ENCODE measurements at regions of chr1 and their contacts with region 1.

Region 1: GRCh38 chr1:151070474-151071276 is at the start of gene GABPB2:
- DNase-seq: peak; percentile 80 to 95 (median 86)
- ATAC-seq: peak; percentile 82
- H3K4me3 Mint-ChIP-seq: peak within 1 kb of the TSS; percentile 95 to 100 (median 100)
- H3K27ac Mint-ChIP-seq: peak within 1 kb of the TSS; percentile 98 to 100 (median 100)
- H3K4me1 Mint-ChIP-seq: peaks cover 12 to 42% (median 31%) of the 10 kb centered on the region in 4 donors
- H3K27me3 Mint-ChIP-seq: no peaks in the 10 kb centered on the region
- polyA plus RNA-seq, gene GABPB2: 4.8 to 16.4 (median 5.4) TPM

Region 2: DNA sequence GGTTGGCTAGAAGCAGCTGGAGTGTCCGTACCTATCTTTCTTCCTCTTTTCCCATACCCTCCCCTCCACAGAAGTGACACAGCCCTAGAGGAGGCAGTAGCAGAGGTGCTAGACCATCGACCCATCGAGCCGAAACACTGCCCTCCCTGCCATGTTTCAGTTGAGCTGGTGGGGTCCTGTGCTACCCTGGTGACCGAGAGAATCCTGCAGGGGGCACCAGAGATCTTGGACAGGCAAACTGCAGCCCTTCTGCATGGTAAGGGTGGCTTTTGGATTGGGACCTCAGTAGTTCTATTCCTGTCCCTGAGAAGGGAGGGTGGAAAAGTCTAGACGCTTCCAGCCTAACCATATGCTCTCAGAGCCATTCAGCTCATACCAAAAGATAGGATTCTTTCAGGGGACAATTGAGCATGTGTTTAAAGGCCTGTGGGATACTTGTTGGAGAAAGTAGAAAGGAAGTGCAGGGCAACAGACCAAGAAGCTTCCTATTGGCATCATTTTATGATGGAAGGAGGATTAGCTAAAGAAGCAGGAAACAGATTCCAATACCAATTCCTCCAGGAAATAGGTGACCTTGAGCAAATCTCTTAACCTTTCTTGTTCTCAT is 46.0 kb before region 1 on chr1:
- POLR2A ChIA-PET with region 1: interaction called, 20 read pairs
- DNase-seq: peak; percentile 77 to 94 (median 88)
- ATAC-seq: peak; percentile 100
- H3K4me3 Mint-ChIP-seq: peak overlapping the region in 9 of 10 donors; percentile 23 to 79 (median 56)
- H3K27ac Mint-ChIP-seq: peak overlapping the region; percentile 11 to 88 (median 71)
- H3K4me1 Mint-ChIP-seq: peaks cover 4 to 8% (median 7%) of the 10 kb centered on the region in 4 donors
- H3K27me3 Mint-ChIP-seq: no peaks in the 10 kb centered on the region

Region 3: GRCh38 chr1:151098126-151098525 is 27.5 kb after region 1 on chr1:
- POLR2A ChIA-PET with region 1: interaction called, 11 read pairs
- DNase-seq: no peak
- ATAC-seq: no peak
- H3K4me3 Mint-ChIP-seq: no peak overlapping the region
- H3K27ac Mint-ChIP-seq: no peak overlapping the region
- H3K4me1 Mint-ChIP-seq: peaks cover 0 to 2% (median 0%) of the 10 kb centered on the region in 4 donors
- H3K27me3 Mint-ChIP-seq: no peaks in the 10 kb centered on the region

Measured in naive thymus-derived CD8-positive, alpha-beta T cell (primary cell).